ENCODE measurements at regions of chr12 and their contacts with region 1.

Region 1: GRCh38 chr12:8687846-8688601 is 9.8 kb upstream of the RIMKLB start:
- DNase-seq: peak in 1 of 2 donors; percentile 41
- ATAC-seq: peak; percentile 75 to 77
- H3K4me3 ChIP-seq: no peak overlapping the region
- H3K27ac ChIP-seq: peak overlapping the region in 1 of 4 donors; percentile 16
- H3K4me1 ChIP-seq: peaks cover 6 to 15% of the 10 kb centered on the region in 2 donors
- H3K27me3 ChIP-seq: no peaks in the 10 kb centered on the region
- CTCF ChIP-seq: no peak
- POLR2A ChIP-seq: no peak

Region 2: DNA sequence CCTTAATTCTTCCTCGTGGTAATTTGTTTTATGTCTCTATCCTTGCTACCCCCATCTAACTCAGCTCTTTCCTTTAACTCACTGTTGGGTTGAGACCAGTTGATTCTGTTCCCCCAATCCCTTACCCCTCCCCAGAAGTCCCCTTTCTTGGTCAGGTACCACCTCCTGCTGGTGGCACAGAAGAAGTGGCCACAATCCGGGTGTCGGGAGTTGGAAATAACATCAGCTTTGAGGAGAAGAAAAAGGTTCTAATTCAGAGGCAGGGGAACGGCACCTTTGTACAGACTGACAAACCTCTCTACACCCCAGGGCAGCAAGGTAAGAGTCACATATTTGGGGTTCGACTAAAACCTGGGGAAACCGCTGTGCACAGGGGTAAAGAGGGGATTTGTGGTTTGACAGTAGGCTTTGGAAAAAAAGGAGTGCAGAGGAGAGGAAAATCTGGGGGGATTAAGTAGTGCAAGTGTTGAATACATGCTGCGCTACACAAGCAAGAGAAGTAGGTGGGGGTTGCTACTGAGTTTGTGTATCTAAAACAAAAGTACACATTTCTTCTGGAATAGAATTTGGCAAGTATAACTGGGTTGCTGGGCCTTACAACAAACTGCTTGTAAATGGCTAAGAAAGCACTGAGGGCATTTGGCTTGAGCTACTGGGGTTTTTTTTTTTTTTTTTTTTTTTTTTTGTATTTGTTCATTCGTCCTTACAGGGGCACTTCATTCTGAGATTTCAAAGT is 135.7 kb after region 1 on chr12:
- in situ Hi-C with region 1: no loop called
- intact Hi-C with region 1: loop called (anchors 2 kb)
- DNase-seq: no peak
- ATAC-seq: no peak
- H3K4me3 ChIP-seq: no peak overlapping the region
- H3K27ac ChIP-seq: no peak overlapping the region
- H3K4me1 ChIP-seq: no peaks in the 10 kb centered on the region
- H3K27me3 ChIP-seq: peaks cover 0 to 2% (median 0%) of the 10 kb centered on the region in 3 donors
- CTCF ChIP-seq: peak; percentile 27 to 53 (median 46)
- POLR2A ChIP-seq: no peak

Region 3: GRCh38 chr12:8890313-8891085 is 202.5 kb after region 1 on chr12:
- in situ Hi-C with region 1: loop called (anchors 5 to 10 kb)
- intact Hi-C with region 1: no loop called
- DNase-seq: peak in 1 of 2 donors; percentile 18
- ATAC-seq: peak; percentile 50 to 79
- H3K4me3 ChIP-seq: peak overlapping the region; percentile 51 to 61 (median 56)
- H3K27ac ChIP-seq: peak overlapping the region in 1 of 4 donors; percentile 13
- H3K4me1 ChIP-seq: peaks cover 0 to 3% of the 10 kb centered on the region in 2 donors
- H3K27me3 ChIP-seq: no peaks in the 10 kb centered on the region
- CTCF ChIP-seq: peak; percentile 63 to 91 (median 76)
- POLR2A ChIP-seq: no peak

Region 4: GRCh38 chr12:8960176-8960575 is 272.2 kb after region 1 on chr12:
- in situ Hi-C with region 1: no loop called
- intact Hi-C with region 1: no loop called
- DNase-seq: no peak
- ATAC-seq: no peak
- H3K4me3 ChIP-seq: no peak overlapping the region
- H3K27ac ChIP-seq: no peak overlapping the region
- H3K4me1 ChIP-seq: no peaks in the 10 kb centered on the region
- H3K27me3 ChIP-seq: no peaks in the 10 kb centered on the region
- CTCF ChIP-seq: no peak
- POLR2A ChIP-seq: no peak

Region 5: DNA sequence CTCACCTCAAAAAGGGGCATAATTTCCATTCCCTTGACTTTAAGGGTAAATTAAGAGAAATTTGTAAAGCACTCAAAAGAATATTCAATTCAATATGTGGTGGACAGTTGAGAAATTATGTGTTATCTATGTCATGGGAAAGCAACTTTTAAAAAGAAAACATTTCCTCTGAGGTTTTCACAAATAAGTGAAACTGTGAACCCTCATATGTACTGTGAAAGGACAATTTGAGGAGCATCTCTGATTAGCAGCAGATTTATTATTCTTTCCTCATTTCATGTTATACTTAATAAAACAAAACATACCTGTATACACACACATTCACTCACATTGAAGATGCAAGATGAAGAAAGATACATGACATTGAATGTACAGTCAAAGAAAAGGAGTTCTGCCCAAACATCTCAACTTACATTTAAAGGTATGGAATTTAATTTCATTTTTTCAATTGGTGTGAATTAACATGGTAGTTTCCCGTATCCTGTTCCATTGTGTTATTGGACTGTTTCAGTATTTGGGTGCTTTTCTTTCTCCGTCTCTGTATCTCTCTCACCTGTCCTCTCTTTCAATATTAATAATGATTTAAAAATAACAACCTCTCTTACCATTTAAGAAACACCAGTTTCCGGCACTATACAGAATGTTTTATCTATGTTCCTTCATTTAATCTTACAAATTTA is 1139.3 kb after region 1 on chr12 and contains the start of gene KLRF1:
- in situ Hi-C with region 1: no loop called
- intact Hi-C with region 1: no loop called
- DNase-seq: no peak
- ATAC-seq: no peak
- H3K4me3 ChIP-seq: no peak within 1 kb of the TSS
- H3K27ac ChIP-seq: no peak within 1 kb of the TSS
- H3K4me1 ChIP-seq: no peaks in the 10 kb centered on the region
- H3K27me3 ChIP-seq: no peaks in the 10 kb centered on the region
- CTCF ChIP-seq: no peak
- POLR2A ChIP-seq: no peak
- total RNA-seq, gene KLRF1: not detected

Measured in gastrocnemius medialis (tissue), 4 donors.